AG04450 (cell line): ENCODE measurements at regions of chr12 and their contacts with region 1.

Region 1: DNA sequence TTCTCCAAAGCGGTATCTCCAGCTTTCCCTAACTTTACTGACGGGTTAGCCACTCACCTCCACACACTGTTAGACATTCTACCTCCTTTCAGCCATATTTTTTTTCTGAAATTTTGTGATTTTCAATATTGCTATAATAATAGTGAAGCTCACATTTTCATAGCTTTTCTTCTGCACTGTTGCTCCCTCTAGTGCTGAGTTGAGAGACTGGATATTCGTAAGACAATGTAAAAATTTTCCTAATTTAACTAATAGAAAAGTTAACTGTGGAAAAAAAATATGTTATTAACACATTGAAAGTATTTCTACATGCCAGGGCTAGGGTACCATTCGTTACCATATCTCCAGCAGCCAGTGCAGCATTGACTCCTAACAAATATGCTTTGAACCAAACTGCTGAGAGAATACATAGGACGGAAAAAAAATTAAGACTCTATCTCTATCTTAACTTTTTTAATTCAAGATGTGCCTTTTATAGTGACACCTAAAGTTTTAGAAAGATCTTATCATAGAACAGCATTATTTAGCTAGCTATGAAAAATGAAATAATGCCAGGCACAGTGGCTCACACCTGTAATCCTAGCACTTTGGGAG is 48.7 kb upstream of the ABCC9 start:
- DNase-seq: no peak
- H3K4me3 ChIP-seq: no peak overlapping the region
- H3K27ac ChIP-seq: no peak overlapping the region
- H3K27me3 ChIP-seq: no peaks in the 10 kb centered on the region
- CTCF ChIP-seq: peak; percentile 78

Region 2: GRCh38 chr12:21774358-21775132 is 215.4 kb before region 1 on chr12 and contains the start of gene KCNJ8:
- CTCF ChIA-PET with region 1: interaction called, 17 read pairs
- POLR2A ChIA-PET with region 1: no interaction called
- DNase-seq: peak; percentile 10
- H3K4me3 ChIP-seq: peak within 1 kb of the TSS; percentile 72
- H3K27ac ChIP-seq: no peak within 1 kb of the TSS
- H3K27me3 ChIP-seq: no peaks in the 10 kb centered on the region
- CTCF ChIP-seq: no peak
- polyA plus RNA-seq, gene KCNJ8: 5.3 and 6.0 TPM in 2 replicates

Region 3: GRCh38 chr12:22002430-22002829 is 12.5 kb after region 1 on chr12:
- CTCF ChIA-PET with region 1: interaction called, 10 read pairs
- POLR2A ChIA-PET with region 1: no interaction called
- DNase-seq: no peak
- H3K4me3 ChIP-seq: no peak overlapping the region
- H3K27ac ChIP-seq: no peak overlapping the region
- H3K27me3 ChIP-seq: no peaks in the 10 kb centered on the region
- CTCF ChIP-seq: no peak

Region 4: GRCh38 chr12:22018860-22019259 is 28.9 kb after region 1 on chr12:
- CTCF ChIA-PET with region 1: interaction called, 11 read pairs
- POLR2A ChIA-PET with region 1: no interaction called
- DNase-seq: no peak
- H3K4me3 ChIP-seq: no peak overlapping the region
- H3K27ac ChIP-seq: no peak overlapping the region
- H3K27me3 ChIP-seq: no peaks in the 10 kb centered on the region
- CTCF ChIP-seq: no peak; the same call in 1 of the 2 replicates

Region 5: GRCh38 chr12:22443379-22444316 is 453.7 kb after region 1 on chr12:
- CTCF ChIA-PET with region 1: interaction called, 11 read pairs
- POLR2A ChIA-PET with region 1: no interaction called
- DNase-seq: peak; percentile 36
- H3K4me3 ChIP-seq: no peak overlapping the region
- H3K27ac ChIP-seq: no peak overlapping the region
- H3K27me3 ChIP-seq: peaks cover 5% of the 10 kb centered on the region
- CTCF ChIP-seq: peak; percentile 82